Head of caudate nucleus (tissue), 42 donors: ENCODE measurements at regions of chr1 and their contacts with region 1.

Region 1: GRCh38 chr1:84298328-84298683 is 3.2 kb upstream of the SAMD13 start:
- DNase-seq: peak; percentile 31 to 89 (median 76)

Region 2: DNA sequence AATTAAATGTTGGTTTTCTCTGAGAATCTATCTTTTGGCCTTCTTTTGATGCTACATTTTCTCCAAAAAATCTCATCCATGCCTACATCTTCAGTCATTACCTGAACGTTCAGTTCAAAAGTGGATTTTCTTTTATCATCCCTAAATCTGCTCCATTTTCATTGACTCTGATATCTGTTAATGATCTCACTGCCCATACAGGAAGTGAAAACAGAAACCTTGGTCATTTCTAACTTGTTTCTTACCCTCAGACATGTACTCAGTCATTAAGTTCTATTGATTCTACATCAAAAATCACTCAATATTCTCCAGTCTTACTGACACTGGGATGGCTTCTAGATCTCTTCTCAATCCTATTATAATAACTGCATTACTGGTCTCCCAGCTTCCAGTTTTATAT is 131.5 kb before region 1 on chr1:
- intact Hi-C with region 1: loop called (anchors 5 kb)
- DNase-seq: no peak

Region 3: GRCh38 chr1:84253891-84254290 is 44.4 kb before region 1 on chr1:
- intact Hi-C with region 1: loop called (anchors 5 kb)
- DNase-seq: peak; percentile 49 to 97 (median 85)

Region 4: DNA sequence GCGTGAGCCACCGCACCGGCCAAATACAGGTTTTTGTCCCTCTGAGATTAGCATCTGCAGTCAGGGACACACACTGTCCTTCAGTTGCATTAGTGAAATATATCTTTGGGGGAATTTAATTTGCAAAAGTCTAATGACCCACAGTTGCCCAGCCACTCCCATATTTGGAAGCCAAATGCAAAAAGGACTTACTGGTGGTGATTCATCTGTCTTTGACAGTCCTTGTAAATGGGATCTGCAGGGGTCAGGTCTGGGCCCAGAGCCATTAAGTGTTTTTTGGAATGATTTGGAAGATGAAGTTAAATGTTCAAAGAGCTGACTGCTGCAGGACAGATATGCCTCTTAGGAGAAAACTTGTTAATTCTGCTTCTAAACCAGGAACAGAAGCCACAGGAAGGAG is 55.4 kb after region 1 on chr1:
- intact Hi-C with region 1: loop called (anchors 10 kb)
- DNase-seq: no peak

Region 5: DNA sequence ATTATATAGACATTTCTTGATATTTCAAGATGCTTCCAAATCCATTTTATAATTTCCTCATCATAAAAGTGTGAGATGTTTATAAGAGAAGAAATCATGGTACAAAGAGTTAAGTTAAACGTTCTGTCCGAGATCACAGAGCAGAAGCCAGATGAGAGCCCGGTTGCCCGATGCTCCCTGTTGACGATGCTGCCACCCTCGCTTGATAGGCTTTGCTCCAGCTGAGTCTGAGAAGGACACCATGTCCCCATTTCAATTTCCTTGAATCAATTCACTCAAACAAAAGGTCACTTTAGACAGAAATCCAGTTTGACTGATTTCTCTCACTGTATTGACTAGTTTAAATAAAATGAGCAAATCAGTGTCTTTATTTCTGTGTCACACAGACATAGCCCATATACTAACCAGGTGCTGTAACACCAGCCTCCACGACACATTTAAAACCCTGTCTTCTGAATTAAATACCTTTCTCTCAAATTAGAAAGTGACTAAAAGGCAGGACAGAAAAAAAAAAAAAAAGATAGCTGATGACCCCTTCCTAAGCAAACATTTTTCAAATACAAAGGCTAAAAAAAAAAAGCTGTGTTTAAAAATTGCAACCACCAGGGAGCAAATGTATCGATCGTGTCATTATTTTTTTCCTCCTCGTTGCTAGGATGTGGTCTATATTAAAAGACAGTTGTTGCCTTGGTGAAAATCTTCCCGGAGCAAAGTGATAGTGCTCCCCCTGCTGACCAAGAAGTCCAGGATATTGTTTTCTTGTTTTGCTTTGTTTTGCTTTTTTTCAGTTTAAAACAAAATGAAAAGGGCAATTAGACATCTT is 135.2 kb after region 1 on chr1:
- intact Hi-C with region 1: loop called (anchors 5 kb)
- DNase-seq: peak; percentile 17 to 89 (median 66)